ENCODE measurements at regions of chr3 and their contacts with region 1.

Region 1: GRCh38 chr3:99023590-99024192 is 122.2 kb upstream of the DCBLD2 start:
- DNase-seq: peak; percentile 66
- H3K4me3 ChIP-seq: no peak overlapping the region
- H3K27ac ChIP-seq: no peak overlapping the region
- H3K4me1 ChIP-seq: no peaks in the 10 kb centered on the region
- H3K27me3 ChIP-seq: no peaks in the 10 kb centered on the region
- CTCF ChIP-seq: peak; percentile 40 to 46
- POLR2A ChIP-seq: no peak

Region 2: GRCh38 chr3:98962189-98962930 is 61.3 kb before region 1 on chr3:
- CTCF ChIA-PET with region 1: no interaction called
- POLR2A ChIA-PET with region 1: no interaction called
- dilution Hi-C with region 1: no loop called
- intact Hi-C with region 1: no loop called
- DNase-seq: peak; percentile 57
- H3K4me3 ChIP-seq: no peak overlapping the region
- H3K27ac ChIP-seq: peak overlapping the region; percentile 63
- H3K4me1 ChIP-seq: peaks cover 36% of the 10 kb centered on the region
- H3K27me3 ChIP-seq: no peaks in the 10 kb centered on the region
- CTCF ChIP-seq: no peak
- POLR2A ChIP-seq: no peak

Region 3: GRCh38 chr3:99532246-99532645 is 508.6 kb after region 1 on chr3:
- CTCF ChIA-PET with region 1: interaction called, 15 read pairs
- POLR2A ChIA-PET with region 1: no interaction called
- dilution Hi-C with region 1: no loop called
- intact Hi-C with region 1: loop called (anchors 1 kb)
- DNase-seq: peak; percentile 88
- H3K4me3 ChIP-seq: no peak overlapping the region
- H3K27ac ChIP-seq: peak overlapping the region; percentile 5
- H3K4me1 ChIP-seq: no peaks in the 10 kb centered on the region
- H3K27me3 ChIP-seq: no peaks in the 10 kb centered on the region
- CTCF ChIP-seq: peak; percentile 75 to 81
- POLR2A ChIP-seq: no peak

Region 4: GRCh38 chr3:99686955-99687612 is 663.4 kb after region 1 on chr3:
- CTCF ChIA-PET with region 1: interaction called, 5 read pairs
- POLR2A ChIA-PET with region 1: no interaction called
- dilution Hi-C with region 1: no loop called
- intact Hi-C with region 1: loop called (anchors 1 kb)
- DNase-seq: peak; percentile 71
- H3K4me3 ChIP-seq: no peak overlapping the region
- H3K27ac ChIP-seq: no peak overlapping the region
- H3K4me1 ChIP-seq: peaks cover 11% of the 10 kb centered on the region
- H3K27me3 ChIP-seq: no peaks in the 10 kb centered on the region
- CTCF ChIP-seq: peak; percentile 54 to 55
- POLR2A ChIP-seq: peak; percentile 4

Region 5: DNA sequence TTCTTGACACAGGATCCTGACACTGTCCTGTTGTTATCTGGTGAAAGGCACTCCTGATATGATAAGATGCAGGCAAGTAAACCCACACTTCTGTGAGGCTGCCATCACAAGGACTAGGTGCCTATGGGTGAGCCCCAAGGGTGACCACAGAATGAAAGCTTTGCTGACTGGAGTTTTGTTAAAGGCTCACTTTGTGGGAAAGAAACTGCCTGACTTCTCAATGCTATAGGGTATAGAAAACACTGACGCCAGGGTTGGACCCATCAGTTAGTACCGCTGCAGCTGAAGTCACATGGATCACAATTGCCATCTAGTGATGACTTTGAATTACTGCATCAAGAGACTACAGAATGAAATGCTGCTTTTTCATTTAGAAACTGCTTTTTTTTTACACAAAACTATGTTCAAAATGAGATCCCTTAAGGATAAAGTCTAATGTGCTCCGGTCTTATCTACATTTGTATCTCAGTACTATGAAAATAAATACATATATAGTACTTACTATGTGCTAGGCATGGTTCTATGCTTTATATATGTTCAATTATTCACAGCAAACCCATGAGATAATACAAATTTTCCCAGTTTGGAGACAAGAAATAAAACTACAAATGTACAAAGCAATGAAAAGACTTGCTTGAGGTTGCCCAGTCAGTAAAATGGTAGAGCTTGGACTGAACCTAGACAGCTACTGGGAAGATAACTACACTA is 729.7 kb after region 1 on chr3:
- CTCF ChIA-PET with region 1: interaction called, 47 read pairs
- POLR2A ChIA-PET with region 1: no interaction called
- dilution Hi-C with region 1: loop called (anchors 25 kb)
- intact Hi-C with region 1: loop called (anchors 1 kb)
- DNase-seq: peak; percentile 77
- H3K4me3 ChIP-seq: no peak overlapping the region
- H3K27ac ChIP-seq: peak overlapping the region; percentile 21
- H3K4me1 ChIP-seq: peaks cover 28% of the 10 kb centered on the region
- H3K27me3 ChIP-seq: no peaks in the 10 kb centered on the region
- CTCF ChIP-seq: peak; percentile 56 to 58
- POLR2A ChIP-seq: no peak

Region 6: GRCh38 chr3:99808151-99808794 is 784.6 kb after region 1 on chr3:
- CTCF ChIA-PET with region 1: interaction called, 32 read pairs
- POLR2A ChIA-PET with region 1: no interaction called
- dilution Hi-C with region 1: no loop called
- intact Hi-C with region 1: loop called (anchors 1 kb)
- DNase-seq: peak; percentile 86
- H3K4me3 ChIP-seq: no peak overlapping the region
- H3K27ac ChIP-seq: no peak overlapping the region
- H3K4me1 ChIP-seq: no peaks in the 10 kb centered on the region
- H3K27me3 ChIP-seq: no peaks in the 10 kb centered on the region
- CTCF ChIP-seq: peak; percentile 84 to 87
- POLR2A ChIP-seq: no peak